ENCODE measurements at regions of chr6 and their contacts with region 1.

Region 1: GRCh38 chr6:108782179-108783041 is 65.8 kb upstream of the ARMC2 start:
- DNase-seq: peak; percentile 88
- H3K4me3 ChIP-seq: peak overlapping the region; percentile 56 to 79 (median 60)
- H3K27ac ChIP-seq: no peak overlapping the region
- H3K4me1 ChIP-seq: peaks cover 18% of the 10 kb centered on the region
- H3K27me3 ChIP-seq: no peaks in the 10 kb centered on the region
- CTCF ChIP-seq: peak; percentile 72 to 85
- POLR2A ChIP-seq: no peak

Region 2: GRCh38 chr6:109009236-109009961 is 227.0 kb after region 1 on chr6:
- CTCF ChIA-PET with region 1: no interaction called
- POLR2A ChIA-PET with region 1: no interaction called
- dilution Hi-C with region 1: no loop called
- intact Hi-C with region 1: no loop called
- DNase-seq: peak; percentile 86
- H3K4me3 ChIP-seq: peak overlapping the region; percentile 63 to 95 (median 92)
- H3K27ac ChIP-seq: peak overlapping the region; percentile 41
- H3K4me1 ChIP-seq: peaks cover 6% of the 10 kb centered on the region
- H3K27me3 ChIP-seq: no peaks in the 10 kb centered on the region
- CTCF ChIP-seq: no peak
- POLR2A ChIP-seq: peak; percentile 75

Region 3: DNA sequence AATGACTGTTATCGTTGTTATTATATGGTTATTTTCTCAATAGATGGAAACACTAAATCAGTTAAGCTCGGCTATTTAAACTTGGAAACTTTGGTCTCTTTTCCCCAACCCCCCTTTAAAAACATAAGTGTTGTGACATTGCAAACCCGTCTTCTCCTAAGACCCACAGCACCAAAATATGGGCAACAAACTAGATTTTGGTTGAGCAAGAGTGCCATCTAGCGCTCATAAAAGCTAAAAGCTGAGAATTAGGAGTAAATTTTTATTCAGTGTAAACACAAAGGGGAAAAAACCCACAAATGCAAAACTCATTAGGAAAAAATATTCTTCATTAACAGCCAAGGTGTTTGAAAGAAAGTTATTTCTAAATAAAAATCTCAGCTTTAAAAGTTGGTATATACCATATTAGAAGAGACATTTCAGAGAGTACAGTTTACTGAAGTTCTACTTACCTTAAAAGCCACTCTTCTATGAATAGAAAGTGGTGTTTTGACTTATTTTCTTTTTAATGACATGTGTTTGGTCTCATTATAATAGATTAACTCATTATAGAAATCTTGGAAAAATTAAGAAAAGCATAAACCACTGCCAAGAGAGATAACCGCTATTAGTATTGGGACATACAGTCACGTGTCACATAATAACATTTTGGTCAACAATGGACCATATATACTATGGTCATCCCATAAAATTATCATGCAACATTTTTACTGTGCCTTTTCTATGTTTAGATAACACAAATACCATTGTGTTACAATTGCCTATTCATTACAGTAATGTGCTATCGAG is 291.1 kb after region 1 on chr6:
- CTCF ChIA-PET with region 1: interaction called, 8 read pairs
- POLR2A ChIA-PET with region 1: no interaction called
- dilution Hi-C with region 1: no loop called
- intact Hi-C with region 1: loop called (anchors 1 kb)
- DNase-seq: peak; percentile 77
- H3K4me3 ChIP-seq: no peak overlapping the region
- H3K27ac ChIP-seq: no peak overlapping the region
- H3K4me1 ChIP-seq: peaks cover 5% of the 10 kb centered on the region
- H3K27me3 ChIP-seq: no peaks in the 10 kb centered on the region
- CTCF ChIP-seq: peak; percentile 32 to 55
- POLR2A ChIP-seq: no peak